ENCODE measurements at regions of chr1 and their contacts with region 1.

Region 1: DNA sequence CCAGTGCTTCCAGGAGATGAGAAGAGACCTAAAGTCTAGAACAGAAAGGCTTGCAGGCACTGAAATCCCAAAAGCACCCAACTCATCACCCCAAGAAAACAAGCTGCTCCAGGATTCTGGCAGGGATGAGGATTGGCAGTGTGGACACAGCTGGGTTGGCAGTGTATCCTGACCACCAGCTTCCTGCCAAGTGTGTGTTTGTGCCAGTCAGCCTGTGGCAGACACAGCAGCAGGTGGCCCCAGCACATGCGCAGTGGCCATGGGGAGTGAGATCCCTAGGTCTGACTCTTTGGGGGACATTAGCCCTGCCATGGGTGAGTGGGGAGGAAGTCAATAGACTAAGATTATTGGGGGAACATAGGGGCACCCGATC is 8.7 kb upstream of the SNAPIN start:
- DNase-seq: no peak
- ATAC-seq: peak; percentile 35
- H3K4me3 Mint-ChIP-seq: no peak overlapping the region
- H3K27ac Mint-ChIP-seq: peak overlapping the region; percentile 86
- H3K4me1 Mint-ChIP-seq: peaks cover 43% of the 10 kb centered on the region
- H3K27me3 Mint-ChIP-seq: no peaks in the 10 kb centered on the region
- CTCF ChIP-seq: no peak

Region 2: GRCh38 chr1:153639280-153639679 is 10.6 kb before region 1 on chr1:
- CTCF ChIA-PET with region 1: interaction called, 17 read pairs
- POLR2A ChIA-PET with region 1: interaction called, 72 read pairs
- intact Hi-C with region 1: no loop called
- DNase-seq: no peak
- ATAC-seq: no peak
- H3K4me3 Mint-ChIP-seq: no peak overlapping the region
- H3K27ac Mint-ChIP-seq: no peak overlapping the region
- H3K4me1 Mint-ChIP-seq: peaks cover 50% of the 10 kb centered on the region
- H3K27me3 Mint-ChIP-seq: no peaks in the 10 kb centered on the region
- CTCF ChIP-seq: no peak